CD4-positive, alpha-beta T cell (primary cell): ENCODE measurements at regions of chr17 and their contacts with region 1.

Region 1: GRCh38 chr17:35373534-35373983 is at the start of gene SLFN11:
- DNase-seq: peak; percentile 50 to 94 (median 71)
- ATAC-seq: peak; percentile 88
- H3K4me3 ChIP-seq: peak within 1 kb of the TSS; percentile 84
- H3K4me3 Mint-ChIP-seq: peak within 1 kb of the TSS; percentile 96
- H3K27ac ChIP-seq: peak within 1 kb of the TSS; percentile 80 to 96
- H3K27ac Mint-ChIP-seq: peak within 1 kb of the TSS; percentile 95
- H3K4me1 ChIP-seq: peaks cover 16% of the 10 kb centered on the region
- H3K4me1 Mint-ChIP-seq: peaks cover 62% of the 10 kb centered on the region
- H3K27me3 ChIP-seq: no peaks in the 10 kb centered on the region
- H3K27me3 Mint-ChIP-seq: no peaks in the 10 kb centered on the region
- CTCF ChIP-seq: no peak
- total RNA-seq, gene SLFN11: 16.5 to 18.5 TPM

Region 2: DNA sequence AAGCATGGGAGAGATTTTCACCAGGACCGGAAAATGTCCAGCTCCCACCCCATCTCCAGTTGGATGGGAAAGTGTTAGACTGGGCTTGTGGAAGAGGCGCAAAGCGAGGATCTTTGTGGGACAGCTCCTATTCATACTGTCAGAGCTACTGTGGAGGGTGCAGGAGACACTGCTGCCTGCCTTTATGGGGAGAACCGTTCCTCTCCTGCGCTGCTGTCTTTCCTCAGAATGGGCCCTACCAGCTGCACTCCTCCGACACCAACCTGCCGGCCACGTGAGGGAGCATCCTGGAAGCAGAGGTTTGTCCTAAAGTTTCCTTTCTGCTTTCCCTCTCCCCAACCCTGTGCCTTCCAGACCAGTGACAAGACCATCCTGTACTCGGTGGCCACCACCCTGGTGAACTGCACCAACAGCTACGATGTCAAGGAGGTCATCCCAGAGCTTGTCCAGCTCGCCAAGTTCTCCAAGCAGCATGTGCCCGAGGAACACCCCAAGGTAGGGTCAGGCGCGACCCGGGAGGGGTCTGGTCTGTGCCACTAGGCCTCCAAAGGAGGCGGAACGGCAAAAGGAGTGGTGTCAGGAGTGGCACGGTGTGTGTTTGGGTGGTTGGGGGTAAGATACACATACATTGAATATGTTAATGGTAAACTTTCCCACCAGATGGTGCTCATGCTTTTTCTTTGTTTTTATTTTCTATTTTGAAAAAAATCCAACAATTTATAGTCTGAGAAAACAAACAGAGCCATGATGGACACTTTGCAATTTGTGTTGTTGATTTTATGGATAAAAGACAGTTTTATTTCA is 202.4 kb before region 1 on chr17:
- CTCF ChIA-PET with region 1: no interaction called
- POLR2A ChIA-PET with region 1: interaction called, 3 read pairs
- intact Hi-C with region 1: loop called in 1 of 2 experiments (anchors 2 kb)
- DNase-seq: peak in 9 of 14 experiments; percentile 13 to 80 (median 42)
- ATAC-seq: peak; percentile 79
- H3K4me3 ChIP-seq: no peak overlapping the region
- H3K4me3 Mint-ChIP-seq: peak overlapping the region; percentile 80
- H3K27ac ChIP-seq: no peak overlapping the region
- H3K27ac Mint-ChIP-seq: peak overlapping the region; percentile 92
- H3K4me1 ChIP-seq: peaks cover 40% of the 10 kb centered on the region
- H3K4me1 Mint-ChIP-seq: peaks cover 52% of the 10 kb centered on the region
- H3K27me3 ChIP-seq: no peaks in the 10 kb centered on the region
- H3K27me3 Mint-ChIP-seq: no peaks in the 10 kb centered on the region
- CTCF ChIP-seq: peak; percentile 68

Region 3: DNA sequence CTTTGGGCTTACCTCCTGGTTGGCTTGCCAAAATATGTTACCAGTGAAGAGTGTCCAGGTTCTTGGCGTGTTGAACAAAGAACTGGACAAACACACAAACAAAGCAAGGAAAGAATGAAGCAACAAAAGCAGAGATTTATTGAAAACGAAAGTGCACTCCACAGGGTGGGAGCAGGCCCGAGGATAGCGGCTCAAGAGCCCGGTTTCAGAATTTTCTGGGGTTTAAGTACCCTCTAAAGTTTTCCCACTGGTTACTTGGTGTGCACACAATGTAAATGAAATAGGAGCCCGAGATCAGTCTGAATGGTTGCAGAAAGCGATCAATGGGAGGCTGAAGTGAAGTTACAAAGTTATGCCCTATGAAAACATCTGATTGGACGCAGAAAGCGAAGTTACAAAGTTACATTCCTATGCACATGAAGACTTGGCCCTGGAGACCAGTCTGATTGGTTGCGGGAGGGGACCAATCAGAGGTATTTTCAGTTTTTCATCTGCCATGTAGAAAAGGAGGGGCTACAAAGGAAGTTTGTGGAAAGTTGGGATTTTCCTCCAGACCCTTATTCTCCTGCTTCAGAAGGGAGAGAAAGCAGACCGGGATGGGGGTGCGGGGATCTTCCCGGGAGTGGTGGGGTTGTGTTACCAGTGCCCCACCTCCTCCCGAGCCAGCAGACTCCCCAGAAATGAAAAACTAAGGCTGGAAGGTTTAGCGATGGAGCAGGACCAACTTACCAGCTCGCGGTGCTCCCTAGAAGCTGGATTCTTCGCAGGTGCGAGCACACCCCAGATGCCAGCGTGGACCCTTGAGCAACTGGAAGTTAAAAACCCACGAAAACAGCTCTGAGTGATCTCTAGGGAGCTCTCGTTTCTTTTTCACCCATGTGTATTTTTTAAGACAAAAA is 58.9 kb after region 1 on chr17 and contains the start of gene SLFN12:
- CTCF ChIA-PET with region 1: no interaction called
- POLR2A ChIA-PET with region 1: interaction called, 11 read pairs
- intact Hi-C with region 1: loop called in 1 of 2 experiments (anchors 10 kb)
- DNase-seq: peak in 13 of 14 experiments; percentile 5 to 87 (median 35)
- ATAC-seq: peak; percentile 92
- H3K4me3 ChIP-seq: peak within 1 kb of the TSS; percentile 88
- H3K4me3 Mint-ChIP-seq: peak within 1 kb of the TSS; percentile 99
- H3K27ac ChIP-seq: peak within 1 kb of the TSS; percentile 51 to 57
- H3K27ac Mint-ChIP-seq: peak within 1 kb of the TSS; percentile 85
- H3K4me1 ChIP-seq: peaks cover 38% of the 10 kb centered on the region
- H3K4me1 Mint-ChIP-seq: peaks cover 51% of the 10 kb centered on the region
- H3K27me3 ChIP-seq: no peaks in the 10 kb centered on the region
- H3K27me3 Mint-ChIP-seq: no peaks in the 10 kb centered on the region
- CTCF ChIP-seq: no peak
- total RNA-seq, gene SLFN12: 1.3 to 2.4 TPM

Region 4: GRCh38 chr17:35448214-35448898 is 74.8 kb after region 1 on chr17 and contains the start of gene SLFN13:
- CTCF ChIA-PET with region 1: no interaction called
- POLR2A ChIA-PET with region 1: interaction called, 10 read pairs
- intact Hi-C with region 1: no loop called
- DNase-seq: peak; percentile 64 to 93 (median 76)
- ATAC-seq: peak; percentile 92
- H3K4me3 ChIP-seq: peak within 1 kb of the TSS; percentile 69
- H3K4me3 Mint-ChIP-seq: peak within 1 kb of the TSS; percentile 94
- H3K27ac ChIP-seq: peak within 1 kb of the TSS; percentile 23 to 63
- H3K27ac Mint-ChIP-seq: peak within 1 kb of the TSS; percentile 81
- H3K4me1 ChIP-seq: peaks cover 18% of the 10 kb centered on the region
- H3K4me1 Mint-ChIP-seq: peaks cover 19% of the 10 kb centered on the region
- H3K27me3 ChIP-seq: no peaks in the 10 kb centered on the region
- H3K27me3 Mint-ChIP-seq: no peaks in the 10 kb centered on the region
- CTCF ChIP-seq: no peak
- total RNA-seq, gene SLFN13: 9.5 to 9.7 TPM

Region 5: GRCh38 chr17:35531160-35531559 is 157.6 kb after region 1 on chr17:
- CTCF ChIA-PET with region 1: no interaction called
- POLR2A ChIA-PET with region 1: interaction called, 23 read pairs
- intact Hi-C with region 1: loop called (anchors 2 to 5 kb)
- DNase-seq: peak in 2 of 14 experiments; percentile 37 to 59
- ATAC-seq: peak; percentile 34
- H3K4me3 ChIP-seq: peak overlapping the region; percentile 2
- H3K4me3 Mint-ChIP-seq: peak overlapping the region; percentile 21
- H3K27ac ChIP-seq: peak overlapping the region in 1 of 2 donors; percentile 11
- H3K27ac Mint-ChIP-seq: peak overlapping the region; percentile 80
- H3K4me1 ChIP-seq: peaks cover 37% of the 10 kb centered on the region
- H3K4me1 Mint-ChIP-seq: peaks cover 64% of the 10 kb centered on the region
- H3K27me3 ChIP-seq: no peaks in the 10 kb centered on the region
- H3K27me3 Mint-ChIP-seq: no peaks in the 10 kb centered on the region
- CTCF ChIP-seq: no peak

Region 6: GRCh38 chr17:35612924-35613521 is 239.5 kb after region 1 on chr17:
- CTCF ChIA-PET with region 1: no interaction called
- POLR2A ChIA-PET with region 1: no interaction called
- intact Hi-C with region 1: no loop called
- DNase-seq: peak in 12 of 14 experiments; percentile 10 to 58 (median 30)
- ATAC-seq: no peak
- H3K4me3 ChIP-seq: no peak overlapping the region
- H3K4me3 Mint-ChIP-seq: no peak overlapping the region
- H3K27ac ChIP-seq: no peak overlapping the region
- H3K27ac Mint-ChIP-seq: no peak overlapping the region
- H3K4me1 ChIP-seq: no peaks in the 10 kb centered on the region
- H3K4me1 Mint-ChIP-seq: peaks cover 7% of the 10 kb centered on the region
- H3K27me3 ChIP-seq: no peaks in the 10 kb centered on the region
- H3K27me3 Mint-ChIP-seq: no peaks in the 10 kb centered on the region
- CTCF ChIP-seq: peak; percentile 68